ENCODE measurements at regions of chr1 and their contacts with region 1.

Region 1: DNA sequence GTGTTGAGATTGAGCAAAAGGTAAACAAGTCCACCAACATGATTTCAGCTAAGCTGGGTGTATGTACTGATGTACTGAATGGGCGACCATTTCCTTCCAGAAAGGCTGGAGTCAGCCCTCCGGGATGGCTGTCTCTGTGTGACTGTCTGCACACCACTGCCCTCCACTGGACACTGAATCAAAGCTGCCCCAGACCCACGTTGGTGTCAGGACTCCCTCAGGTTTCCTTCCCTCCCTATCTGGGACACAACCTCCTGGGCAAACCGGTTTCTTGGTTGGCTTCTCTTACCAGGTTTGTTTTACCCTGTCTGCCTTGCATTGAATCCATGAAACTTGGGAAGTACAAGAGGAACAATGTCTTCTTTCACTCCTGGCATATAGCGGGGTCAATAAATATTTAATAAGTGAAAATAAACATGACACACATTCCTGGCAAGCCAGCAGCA is 5.3 kb upstream of the SRP9 start:
- DNase-seq: peak; percentile 91 to 94
- H3K4me3 ChIP-seq: no peak overlapping the region
- H3K27ac ChIP-seq: peak overlapping the region; percentile 45
- H3K4me1 ChIP-seq: peaks cover 51% of the 10 kb centered on the region
- H3K27me3 ChIP-seq: no peaks in the 10 kb centered on the region
- CTCF ChIP-seq: peak; percentile 90

Region 2: DNA sequence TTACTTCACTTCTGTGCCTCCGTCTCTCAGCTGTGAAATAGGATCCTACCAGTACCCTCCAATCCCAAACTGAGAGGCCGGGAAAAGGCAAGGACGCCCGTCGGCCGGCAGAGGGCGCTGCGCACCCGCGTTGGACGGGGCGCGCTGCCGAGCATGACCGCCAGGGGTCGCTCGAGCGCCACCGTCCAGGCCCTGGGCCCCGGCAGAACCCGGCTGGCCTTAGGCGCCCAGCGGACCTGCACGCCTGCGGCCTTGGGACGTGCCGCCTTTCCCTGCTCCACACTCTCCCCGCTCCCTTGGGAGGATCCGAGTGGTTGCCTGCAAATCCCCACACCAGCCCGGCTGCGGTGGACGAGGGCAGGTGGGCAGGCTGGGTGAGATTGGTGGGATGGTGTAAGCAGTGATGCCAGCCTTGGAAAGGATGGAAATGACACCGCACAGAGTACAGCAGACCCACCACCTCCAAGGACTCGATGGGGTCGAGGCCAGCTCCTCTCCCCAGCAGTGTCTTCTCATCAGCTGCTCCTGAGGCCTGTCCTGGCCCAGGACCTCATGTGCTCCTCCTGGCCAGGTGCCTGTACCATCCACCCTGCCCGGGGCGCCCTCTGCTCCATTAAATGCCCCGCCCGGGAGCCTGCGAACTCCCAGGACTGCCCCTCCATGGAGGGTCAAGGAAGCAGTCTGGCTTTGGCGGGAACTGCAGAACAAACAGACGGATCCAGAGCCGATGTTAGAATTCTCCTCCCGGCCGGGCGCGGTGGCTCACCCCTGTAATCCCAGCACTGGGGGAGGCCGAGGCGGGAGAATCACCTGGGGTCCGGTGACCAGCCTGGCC is 297.1 kb before region 1 on chr1:
- CTCF ChIA-PET with region 1: interaction called, 3 read pairs
- POLR2A ChIA-PET with region 1: interaction called, 6 read pairs
- intact Hi-C with region 1: loop called (anchors 1 kb)
- DNase-seq: peak; percentile 54 to 86
- H3K4me3 ChIP-seq: no peak overlapping the region; the same call in 1 of the 2 replicates
- H3K27ac ChIP-seq: no peak overlapping the region
- H3K4me1 ChIP-seq: peaks cover 8% of the 10 kb centered on the region
- H3K27me3 ChIP-seq: no peaks in the 10 kb centered on the region
- CTCF ChIP-seq: peak; percentile 100

Region 3: GRCh38 chr1:225508538-225509375 is 263.6 kb before region 1 on chr1:
- CTCF ChIA-PET with region 1: interaction called, 11 read pairs
- POLR2A ChIA-PET with region 1: interaction called, 17 read pairs
- intact Hi-C with region 1: loop called (anchors 1 kb)
- DNase-seq: peak; percentile 65 to 98
- H3K4me3 ChIP-seq: no peak overlapping the region
- H3K27ac ChIP-seq: peak overlapping the region; percentile 93
- H3K4me1 ChIP-seq: peaks cover 36% of the 10 kb centered on the region
- H3K27me3 ChIP-seq: no peaks in the 10 kb centered on the region
- CTCF ChIP-seq: no peak

Region 4: GRCh38 chr1:225700164-225700740 is 72.1 kb before region 1 on chr1:
- CTCF ChIA-PET with region 1: interaction called, 3 read pairs
- POLR2A ChIA-PET with region 1: no interaction called
- intact Hi-C with region 1: loop called (anchors 1 kb)
- DNase-seq: peak; percentile 75 to 99
- H3K4me3 ChIP-seq: peak overlapping the region; percentile 30; the same call in 1 of the 2 replicates
- H3K27ac ChIP-seq: peak overlapping the region; percentile 71
- H3K4me1 ChIP-seq: peaks cover 23% of the 10 kb centered on the region
- H3K27me3 ChIP-seq: no peaks in the 10 kb centered on the region
- CTCF ChIP-seq: no peak

Region 5: GRCh38 chr1:225809842-225810578 is 37.7 kb after region 1 on chr1 and contains the start of gene EPHX1:
- CTCF ChIA-PET with region 1: interaction called, 7 read pairs
- POLR2A ChIA-PET with region 1: interaction called, 11 read pairs
- intact Hi-C with region 1: loop called (anchors 2 kb)
- DNase-seq: peak; percentile 76 to 95
- H3K4me3 ChIP-seq: peak within 1 kb of the TSS; percentile 92
- H3K27ac ChIP-seq: peak within 1 kb of the TSS; percentile 75
- H3K4me1 ChIP-seq: peaks cover 44% of the 10 kb centered on the region
- H3K27me3 ChIP-seq: no peaks in the 10 kb centered on the region
- CTCF ChIP-seq: no peak; the same call in 1 of the 2 replicates
- total RNA-seq, gene EPHX1: 288 and 313 TPM in 2 replicates